ENCODE measurements at regions of chr6 and their contacts with region 1.

Region 1: GRCh38 chr6:86856937-86857563 is 80.3 kb upstream of the HTR1E start:
- DNase-seq: peak; percentile 58
- H3K4me3 Mint-ChIP-seq: no peak overlapping the region
- H3K27ac Mint-ChIP-seq: no peak overlapping the region
- H3K4me1 Mint-ChIP-seq: no peaks in the 10 kb centered on the region
- H3K27me3 Mint-ChIP-seq: no peaks in the 10 kb centered on the region

Region 2: DNA sequence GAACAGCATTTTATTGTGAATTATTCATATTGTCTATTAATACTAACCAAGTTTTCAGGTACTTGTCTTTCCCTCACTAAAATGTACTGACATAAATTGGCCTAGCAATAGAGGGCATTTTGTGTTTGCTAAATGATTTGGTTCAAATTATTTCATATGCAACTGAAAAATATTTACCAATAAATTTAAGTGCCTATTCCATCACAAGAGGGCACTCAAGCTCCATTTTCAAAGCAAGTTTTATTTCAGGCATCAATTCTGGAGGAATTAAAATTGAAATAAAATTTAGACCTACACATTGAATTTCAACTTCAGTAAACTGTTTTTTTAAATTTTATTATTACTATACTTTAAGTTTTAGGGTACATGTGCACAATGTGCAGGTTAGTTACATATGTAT is 1100.1 kb before region 1 on chr6:
- CTCF ChIA-PET with region 1: no interaction called
- intact Hi-C with region 1: loop called (anchors 2 kb)
- DNase-seq: no peak
- H3K4me3 Mint-ChIP-seq: no peak overlapping the region
- H3K27ac Mint-ChIP-seq: no peak overlapping the region
- H3K4me1 Mint-ChIP-seq: no peaks in the 10 kb centered on the region
- H3K27me3 Mint-ChIP-seq: peaks cover 6% of the 10 kb centered on the region

Region 3: DNA sequence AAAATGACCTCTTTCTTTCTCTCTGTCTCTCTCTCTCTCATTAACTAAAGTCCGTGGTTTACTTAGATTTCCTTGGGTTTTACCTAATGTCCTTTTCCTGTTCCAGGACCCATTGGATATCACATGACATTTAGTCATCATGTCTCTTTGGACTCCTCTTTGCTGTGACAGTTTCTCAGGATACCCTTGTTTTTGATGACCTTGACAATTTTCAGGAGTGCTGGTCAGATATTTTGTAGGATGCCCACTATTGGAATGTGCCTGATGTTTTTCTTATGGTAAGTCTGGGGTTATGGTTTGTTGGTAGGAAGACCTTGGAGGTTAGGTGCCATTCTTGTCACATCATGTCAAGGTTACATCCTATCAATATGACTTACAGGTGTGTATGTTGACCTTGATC is 119.0 kb before region 1 on chr6:
- CTCF ChIA-PET with region 1: no interaction called
- intact Hi-C with region 1: no loop called
- DNase-seq: no peak
- H3K4me3 Mint-ChIP-seq: no peak overlapping the region
- H3K27ac Mint-ChIP-seq: no peak overlapping the region
- H3K4me1 Mint-ChIP-seq: no peaks in the 10 kb centered on the region
- H3K27me3 Mint-ChIP-seq: no peaks in the 10 kb centered on the region

Region 4: GRCh38 chr6:87029711-87030314 is 172.8 kb after region 1 on chr6:
- CTCF ChIA-PET with region 1: no interaction called
- intact Hi-C with region 1: loop called (anchors 5 kb)
- DNase-seq: no peak
- H3K4me3 Mint-ChIP-seq: no peak overlapping the region
- H3K27ac Mint-ChIP-seq: no peak overlapping the region
- H3K4me1 Mint-ChIP-seq: no peaks in the 10 kb centered on the region
- H3K27me3 Mint-ChIP-seq: no peaks in the 10 kb centered on the region

Measured in activated naive CD4-positive, alpha-beta T cell treated with anti-CD3 and anti-CD28 coated beads for 36 hours (primary cell).